Heart left ventricle (tissue), 16 donors: ENCODE measurements at regions of chr10 and their contacts with region 1.

Region 1: GRCh38 chr10:6014241-6014761 is 37.0 kb upstream of the IL15RA start:
- DNase-seq: peak in 2 of 5 donors; percentile 44 to 58
- ATAC-seq: peak in 3 of 4 donors; percentile 20 to 64 (median 50)
- H3K4me3 ChIP-seq: no peak overlapping the region
- H3K27ac ChIP-seq: peak overlapping the region in 2 of 12 donors; percentile 1 to 2
- H3K4me1 ChIP-seq: peaks cover 0 to 16% (median 5%) of the 10 kb centered on the region in 12 donors
- H3K27me3 ChIP-seq: no peaks in the 10 kb centered on the region
- CTCF ChIP-seq: peak; percentile 71 to 86 (median 75)
- POLR2A ChIP-seq: no peak

Region 2: GRCh38 chr10:5948999-5949759 is 65.1 kb before region 1 on chr10:
- intact Hi-C with region 1: loop called in 6 of 10 experiments (anchors 5 to 10 kb)
- DNase-seq: peak; percentile 60 to 79 (median 68)
- ATAC-seq: peak in 3 of 4 donors; percentile 28 to 50 (median 42)
- H3K4me3 ChIP-seq: no peak overlapping the region
- H3K27ac ChIP-seq: no peak overlapping the region
- H3K4me1 ChIP-seq: peaks cover 0 to 55% (median 30%) of the 10 kb centered on the region in 12 donors
- H3K27me3 ChIP-seq: no peaks in the 10 kb centered on the region
- CTCF ChIP-seq: peak; percentile 7 to 65 (median 40)
- POLR2A ChIP-seq: no peak

Region 3: GRCh38 chr10:6045314-6045848 is 31.1 kb after region 1 on chr10:
- intact Hi-C with region 1: loop called in 6 of 10 experiments (anchors 2 to 5 kb)
- DNase-seq: no peak
- ATAC-seq: no peak
- H3K4me3 ChIP-seq: no peak overlapping the region
- H3K27ac ChIP-seq: no peak overlapping the region
- H3K4me1 ChIP-seq: peaks cover 0 to 25% (median under 1%) of the 10 kb centered on the region in 12 donors
- H3K27me3 ChIP-seq: peaks cover 0 to 4% (median 0%) of the 10 kb centered on the region in 9 donors
- CTCF ChIP-seq: no peak
- POLR2A ChIP-seq: no peak

Region 4: GRCh38 chr10:6050801-6051445 is 36.6 kb after region 1 on chr10:
- intact Hi-C with region 1: loop called in 6 of 10 experiments (anchors 2 to 5 kb)
- DNase-seq: peak; percentile 55 to 73 (median 65)
- ATAC-seq: peak; percentile 55 to 66 (median 61)
- H3K4me3 ChIP-seq: peak overlapping the region in 11 of 12 donors; percentile 2 to 55 (median 41)
- H3K27ac ChIP-seq: peak overlapping the region; percentile 67 to 88 (median 74)
- H3K4me1 ChIP-seq: peaks cover 0 to 53% (median 24%) of the 10 kb centered on the region in 12 donors
- H3K27me3 ChIP-seq: no peaks in the 10 kb centered on the region
- CTCF ChIP-seq: peak; percentile 8 to 59 (median 42)
- POLR2A ChIP-seq: no peak

Region 5: GRCh38 chr10:6061056-6061455 is 46.8 kb after region 1 on chr10:
- intact Hi-C with region 1: no loop called
- DNase-seq: no peak
- ATAC-seq: no peak
- H3K4me3 ChIP-seq: peak overlapping the region in 4 of 12 donors; percentile 9 to 58 (median 18)
- H3K27ac ChIP-seq: peak overlapping the region in 1 of 12 donors; percentile 21
- H3K4me1 ChIP-seq: peaks cover 0 to 64% (median 8%) of the 10 kb centered on the region in 12 donors
- H3K27me3 ChIP-seq: no peaks in the 10 kb centered on the region
- CTCF ChIP-seq: no peak
- POLR2A ChIP-seq: no peak

Region 6: GRCh38 chr10:6072215-6072934 is 58.1 kb after region 1 on chr10:
- intact Hi-C with region 1: loop called in 1 of 10 experiments (anchors 10 kb)
- DNase-seq: no peak
- ATAC-seq: peak in 2 of 4 donors; percentile 48 to 71
- H3K4me3 ChIP-seq: peak overlapping the region in 1 of 12 donors; percentile 2
- H3K27ac ChIP-seq: peak overlapping the region in 10 of 12 donors; percentile 3 to 80 (median 49)
- H3K4me1 ChIP-seq: peaks cover 0 to 55% (median 11%) of the 10 kb centered on the region in 12 donors
- H3K27me3 ChIP-seq: no peaks in the 10 kb centered on the region
- CTCF ChIP-seq: no peak
- POLR2A ChIP-seq: no peak

Region 7: GRCh38 chr10:6083523-6084475 is 69.5 kb after region 1 on chr10:
- intact Hi-C with region 1: loop called in 8 of 10 experiments (anchors 2 to 10 kb)
- DNase-seq: no peak
- ATAC-seq: peak in 1 of 4 donors; percentile 2
- H3K4me3 ChIP-seq: no peak overlapping the region
- H3K27ac ChIP-seq: peak overlapping the region in 5 of 12 donors; percentile 16 to 51 (median 37)
- H3K4me1 ChIP-seq: peaks cover 0 to 40% (median 22%) of the 10 kb centered on the region in 12 donors
- H3K27me3 ChIP-seq: no peaks in the 10 kb centered on the region
- CTCF ChIP-seq: no peak
- POLR2A ChIP-seq: no peak

Region 8: GRCh38 chr10:6593241-6593671 is 579.0 kb after region 1 on chr10:
- intact Hi-C with region 1: no loop called
- DNase-seq: no peak
- ATAC-seq: no peak
- H3K4me3 ChIP-seq: no peak overlapping the region
- H3K27ac ChIP-seq: no peak overlapping the region
- H3K4me1 ChIP-seq: no peaks in the 10 kb centered on the region
- H3K27me3 ChIP-seq: peaks cover 0 to 40% (median 0%) of the 10 kb centered on the region in 9 donors
- CTCF ChIP-seq: no peak
- POLR2A ChIP-seq: no peak